Activated T-helper 1 cell treated with anti-CD3 and anti-CD28 coated beads, Interleukin-12 subunit alpha, Interleukin-12 subunit beta, Interleukin-2, Interleukin-4 antibody, amounts not matched to agents 30 ng/mL and 10 ng/mL and 1 ng/mL, durations not matched to agents 14 hours and 24 hours and 36 hours (primary cell): ENCODE measurements at regions of chr9 and their contacts with region 1.

Region 1: DNA sequence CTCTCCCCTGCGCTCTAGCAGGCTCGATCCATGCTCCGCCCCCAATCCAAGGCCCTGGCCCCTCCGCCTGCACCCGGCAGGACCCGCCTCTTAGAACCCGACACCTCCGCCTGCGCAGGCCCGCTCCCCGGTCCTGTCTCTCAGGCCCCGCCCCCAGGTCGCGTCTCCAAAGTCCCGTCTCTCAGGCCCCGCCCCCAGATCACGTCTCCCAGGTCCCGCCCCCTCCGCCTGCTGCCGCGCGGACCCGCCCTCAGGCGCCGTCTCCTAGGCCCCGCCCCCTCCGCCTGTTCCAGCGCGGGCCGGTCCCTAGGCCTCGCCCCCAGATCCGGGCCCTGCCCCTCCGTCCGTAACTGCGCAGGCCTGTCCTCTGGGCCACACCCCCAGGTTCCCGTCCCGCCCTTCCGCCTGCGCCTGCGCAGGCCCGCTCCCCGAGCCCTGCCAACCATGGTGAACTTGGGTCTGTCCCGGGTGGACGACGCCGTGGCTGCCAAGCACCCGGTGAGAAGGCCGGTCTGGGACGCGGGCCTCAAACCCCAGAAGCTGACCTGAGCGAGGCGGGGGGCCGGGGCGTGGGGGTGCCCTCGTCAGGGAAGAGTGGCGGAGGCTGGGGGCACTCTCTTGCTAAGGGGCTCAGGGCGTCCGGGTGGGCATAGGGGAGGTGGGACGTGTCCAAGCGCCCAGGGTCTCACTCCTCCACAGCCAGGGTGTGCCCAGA is at the start of gene TMEM141:
- DNase-seq: peak; percentile 100
- H3K4me3 Mint-ChIP-seq: peak within 1 kb of the TSS; percentile 84
- H3K27ac Mint-ChIP-seq: peak within 1 kb of the TSS; percentile 81
- H3K4me1 Mint-ChIP-seq: peaks cover 32% of the 10 kb centered on the region
- H3K27me3 Mint-ChIP-seq: peaks cover 6% of the 10 kb centered on the region
- total RNA-seq, gene TMEM141: 37.2 and 39.0 TPM in 2 replicates

Region 2: DNA sequence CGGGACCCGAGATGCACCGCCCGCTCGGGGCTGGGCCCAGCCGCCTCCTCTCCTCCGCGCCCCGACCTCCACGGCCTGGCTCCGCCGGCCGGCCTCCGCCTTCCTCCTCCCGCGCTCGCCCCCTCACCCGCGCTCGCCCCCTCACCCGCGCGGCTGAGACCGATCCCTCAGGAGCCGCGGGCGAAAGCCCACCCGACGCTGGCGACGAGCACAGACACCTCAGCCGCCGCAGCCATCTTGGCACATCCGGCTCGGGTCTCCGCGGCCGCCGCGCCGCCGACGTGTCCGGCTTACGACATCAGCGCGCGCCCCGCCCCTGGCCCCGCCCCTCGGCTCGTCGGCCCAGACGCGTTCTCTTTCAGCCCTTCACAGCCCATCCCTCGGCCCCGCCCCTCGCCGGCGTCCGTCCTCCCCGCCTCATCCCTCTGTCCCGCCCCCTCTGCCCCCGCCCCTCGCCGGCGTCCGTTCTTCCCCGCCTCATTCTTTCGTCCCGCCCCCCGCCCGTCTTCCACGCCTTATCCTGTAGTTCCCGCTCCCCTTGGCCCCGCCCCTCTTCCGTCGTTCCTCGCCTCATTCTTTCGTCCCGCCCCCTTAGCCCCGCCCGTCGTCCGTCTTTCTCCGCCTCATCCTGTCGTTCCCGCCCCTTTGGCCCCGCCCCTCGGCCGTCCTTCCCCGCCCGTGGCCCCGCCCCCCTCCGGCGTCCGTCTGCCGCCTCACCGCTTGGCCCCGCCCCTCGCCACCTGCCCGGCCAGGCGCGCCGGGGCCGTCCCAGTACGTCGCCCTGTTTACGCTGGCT is 308.1 kb before region 1 on chr9 and contains the start of gene SEC16A:
- intact Hi-C with region 1: loop called (anchors 1 kb)
- DNase-seq: peak; percentile 98
- H3K4me3 Mint-ChIP-seq: peak within 1 kb of the TSS; percentile 96
- H3K27ac Mint-ChIP-seq: peak within 1 kb of the TSS; percentile 95
- H3K4me1 Mint-ChIP-seq: peaks cover 23% of the 10 kb centered on the region
- H3K27me3 Mint-ChIP-seq: no peaks in the 10 kb centered on the region
- total RNA-seq, gene SEC16A: 87.3 and 88.5 TPM in 2 replicates

Region 3: DNA sequence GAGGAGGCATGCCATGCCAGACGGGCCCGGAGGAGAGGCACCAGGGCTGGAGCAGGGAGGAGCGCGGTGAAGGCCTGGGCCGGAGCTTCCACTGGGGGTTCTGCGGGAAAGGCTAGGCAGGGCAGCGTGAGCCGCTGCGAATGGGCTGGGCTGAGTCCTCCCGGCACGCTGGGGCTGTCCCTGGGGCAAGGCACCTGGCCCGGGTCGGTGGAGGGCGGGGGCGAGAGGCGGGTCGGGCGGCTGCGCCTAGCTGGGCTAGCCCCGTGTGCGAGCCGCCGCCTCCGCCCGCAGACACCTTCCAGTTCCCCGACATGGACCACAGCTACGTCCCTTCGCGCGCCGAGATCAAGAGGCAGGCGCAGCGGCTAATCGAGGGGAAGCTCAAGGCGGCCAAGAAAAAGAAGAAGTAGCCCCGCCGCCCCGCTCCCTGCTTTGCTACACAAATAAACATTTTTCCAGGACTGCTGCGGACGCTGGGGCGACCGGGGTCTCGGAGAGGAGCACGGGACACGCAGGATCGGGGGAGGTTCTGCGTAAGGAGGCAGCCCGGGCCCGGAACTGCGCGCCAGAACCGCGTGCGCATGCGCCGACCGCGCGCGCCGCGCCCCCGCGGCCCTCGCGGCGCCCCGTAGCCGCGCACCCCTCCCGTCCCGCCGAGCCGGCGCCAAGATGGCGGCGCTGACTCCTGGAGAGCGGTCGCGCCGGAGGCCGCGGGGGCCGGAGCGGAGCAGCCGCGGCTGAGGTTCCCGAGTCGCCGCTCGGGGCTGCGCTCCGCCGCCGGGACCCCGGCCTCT is 16.4 kb after region 1 on chr9 and contains the start of gene RABL6:
- intact Hi-C with region 1: loop called (anchors 2 kb)
- DNase-seq: peak; percentile 82
- H3K4me3 Mint-ChIP-seq: peak within 1 kb of the TSS; percentile 85
- H3K27ac Mint-ChIP-seq: peak within 1 kb of the TSS; percentile 90
- H3K4me1 Mint-ChIP-seq: peaks cover 28% of the 10 kb centered on the region
- H3K27me3 Mint-ChIP-seq: peaks cover 4% of the 10 kb centered on the region
- total RNA-seq, gene RABL6: 109 and 114 TPM in 2 replicates

Region 4: GRCh38 chr9:136902259-136902821 is 111.3 kb after region 1 on chr9:
- intact Hi-C with region 1: loop called (anchors 1 kb)
- DNase-seq: peak; percentile 88
- H3K4me3 Mint-ChIP-seq: peak overlapping the region; percentile 80
- H3K27ac Mint-ChIP-seq: peak overlapping the region; percentile 99
- H3K4me1 Mint-ChIP-seq: peaks cover 63% of the 10 kb centered on the region
- H3K27me3 Mint-ChIP-seq: no peaks in the 10 kb centered on the region

Region 5: DNA sequence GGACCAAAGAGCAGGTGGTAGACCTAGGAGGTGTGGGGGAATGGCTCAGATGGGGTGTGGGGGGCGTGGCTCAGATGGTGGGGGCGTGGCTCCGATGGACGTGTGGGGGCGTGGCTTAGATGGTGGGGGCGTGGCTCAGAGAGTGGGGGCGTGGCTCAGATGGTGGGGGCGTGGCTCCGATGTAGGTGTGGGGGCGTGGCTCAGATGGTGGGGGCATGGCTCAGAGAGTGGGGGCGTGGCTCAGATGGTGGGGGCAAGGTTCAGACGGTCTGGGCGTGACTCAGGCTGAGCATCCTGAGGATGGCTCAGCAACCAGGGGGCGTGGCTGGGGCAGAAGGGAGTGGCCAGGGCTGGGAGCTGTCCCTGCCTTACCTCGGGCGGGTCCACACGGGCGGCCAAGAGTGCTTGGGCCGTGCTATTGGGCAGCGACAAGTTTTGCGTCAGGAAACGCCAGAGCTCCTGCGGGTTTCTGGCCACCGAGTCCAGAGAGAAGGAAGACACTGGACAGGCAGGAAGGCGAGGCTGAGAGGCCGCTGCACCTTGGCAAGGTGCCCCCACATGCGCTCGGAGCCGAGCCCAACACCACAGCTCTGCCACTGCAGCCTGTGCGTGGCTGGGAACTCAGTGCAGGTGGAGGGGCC is 231.0 kb after region 1 on chr9:
- intact Hi-C with region 1: loop called (anchors 1 kb)
- DNase-seq: peak; percentile 64
- H3K4me3 Mint-ChIP-seq: no peak overlapping the region
- H3K27ac Mint-ChIP-seq: peak overlapping the region; percentile 29
- H3K4me1 Mint-ChIP-seq: no peaks in the 10 kb centered on the region
- H3K27me3 Mint-ChIP-seq: no peaks in the 10 kb centered on the region

Region 6: DNA sequence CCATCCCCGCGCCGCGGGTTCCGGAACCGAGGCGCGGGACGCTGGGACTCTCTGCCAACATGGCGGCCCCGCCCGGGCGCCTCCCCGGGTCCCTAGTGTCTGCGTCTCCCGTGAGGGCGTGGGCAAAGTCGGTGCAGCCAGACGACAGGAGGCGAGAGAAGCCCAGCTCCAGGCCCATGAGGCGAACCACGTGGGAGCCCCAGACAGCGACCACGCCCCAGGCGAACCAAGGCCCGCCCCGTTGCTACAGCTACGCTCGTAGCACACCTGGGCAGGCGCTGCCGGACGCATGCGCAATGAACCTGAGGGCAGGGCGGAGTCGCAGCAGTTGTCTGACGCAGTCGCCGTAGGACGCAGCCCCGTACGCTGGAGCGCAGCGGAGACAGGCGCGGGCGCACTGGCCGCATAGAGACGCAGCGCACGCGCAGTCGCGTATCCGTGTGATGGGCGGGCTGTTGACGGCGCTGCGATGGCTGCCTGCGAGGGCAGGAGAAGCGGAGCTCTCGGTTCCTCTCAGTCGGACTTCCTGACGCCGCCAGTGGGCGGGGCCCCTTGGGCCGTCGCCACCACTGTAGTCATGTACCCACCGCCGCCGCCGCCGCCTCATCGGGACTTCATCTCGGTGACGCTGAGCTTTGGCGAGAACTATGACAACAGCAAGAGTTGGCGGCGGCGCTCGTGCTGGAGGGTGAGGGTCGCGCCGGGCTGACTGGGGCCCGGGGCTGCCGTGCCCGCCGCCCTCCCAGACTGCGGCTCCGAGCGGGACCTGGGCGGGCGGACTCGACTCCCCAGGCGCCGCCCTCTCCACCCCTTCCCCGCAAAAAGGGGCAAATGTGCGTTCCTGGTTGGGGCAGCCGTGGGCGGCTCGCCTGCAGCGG is 295.7 kb after region 1 on chr9 and contains the start of gene MAN1B1:
- intact Hi-C with region 1: loop called (anchors 1 kb)
- DNase-seq: peak; percentile 100
- H3K4me3 Mint-ChIP-seq: peak within 1 kb of the TSS; percentile 88
- H3K27ac Mint-ChIP-seq: peak within 1 kb of the TSS; percentile 94
- H3K4me1 Mint-ChIP-seq: peaks cover 33% of the 10 kb centered on the region
- H3K27me3 Mint-ChIP-seq: no peaks in the 10 kb centered on the region
- total RNA-seq, gene MAN1B1: 48.1 and 53.6 TPM in 2 replicates

Region 7: DNA sequence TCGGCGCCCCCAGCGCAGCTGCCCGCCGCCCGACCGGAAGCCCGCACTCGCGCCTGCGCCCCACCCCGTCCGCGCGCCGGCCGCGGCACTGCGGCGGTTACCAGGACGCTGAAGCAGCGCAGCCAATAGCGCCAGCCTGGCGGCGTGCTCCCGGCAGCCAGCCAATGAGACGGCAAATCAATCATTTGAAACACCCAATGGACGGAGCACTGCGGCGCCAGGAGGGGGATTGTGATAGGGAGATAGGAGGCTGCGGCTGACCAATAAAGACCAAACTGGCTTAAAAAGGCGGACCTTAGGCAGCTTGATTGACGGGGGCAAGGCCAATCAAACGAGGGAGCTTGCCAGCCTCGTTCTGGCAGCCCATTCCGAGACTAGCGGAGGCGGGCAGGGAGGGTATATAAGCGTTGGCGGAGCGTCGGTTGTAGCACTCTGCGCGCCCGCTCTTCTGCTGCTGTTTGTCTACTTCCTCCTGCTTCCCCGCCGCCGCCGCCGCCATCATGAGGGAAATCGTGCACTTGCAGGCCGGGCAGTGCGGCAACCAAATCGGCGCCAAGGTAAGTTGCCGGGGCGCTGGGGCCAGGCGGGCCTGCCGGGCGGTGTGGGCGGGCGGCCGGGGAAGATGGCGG is 449.9 kb after region 1 on chr9 and contains the start of gene TUBB4B:
- intact Hi-C with region 1: loop called (anchors 2 kb)
- DNase-seq: peak; percentile 98
- H3K4me3 Mint-ChIP-seq: peak within 1 kb of the TSS; percentile 92
- H3K27ac Mint-ChIP-seq: peak within 1 kb of the TSS; percentile 91
- H3K4me1 Mint-ChIP-seq: peaks cover 22% of the 10 kb centered on the region
- H3K27me3 Mint-ChIP-seq: no peaks in the 10 kb centered on the region
- total RNA-seq, gene TUBB4B: 277 and 280 TPM in 2 replicates

Region 8: GRCh38 chr9:137459147-137459600 is 668.1 kb after region 1 on chr9 and contains the start of gene NSMF:
- intact Hi-C with region 1: no loop called
- DNase-seq: peak; percentile 95
- H3K4me3 Mint-ChIP-seq: peak within 1 kb of the TSS; percentile 7
- H3K27ac Mint-ChIP-seq: peak within 1 kb of the TSS; percentile 65
- H3K4me1 Mint-ChIP-seq: peaks cover 10% of the 10 kb centered on the region
- H3K27me3 Mint-ChIP-seq: no peaks in the 10 kb centered on the region
- total RNA-seq, gene NSMF: 57.2 and 58.9 TPM in 2 replicates